Sigmoid colon (tissue), 7 donors: ENCODE measurements at regions of chrX and their contacts with region 1.

Region 1: DNA sequence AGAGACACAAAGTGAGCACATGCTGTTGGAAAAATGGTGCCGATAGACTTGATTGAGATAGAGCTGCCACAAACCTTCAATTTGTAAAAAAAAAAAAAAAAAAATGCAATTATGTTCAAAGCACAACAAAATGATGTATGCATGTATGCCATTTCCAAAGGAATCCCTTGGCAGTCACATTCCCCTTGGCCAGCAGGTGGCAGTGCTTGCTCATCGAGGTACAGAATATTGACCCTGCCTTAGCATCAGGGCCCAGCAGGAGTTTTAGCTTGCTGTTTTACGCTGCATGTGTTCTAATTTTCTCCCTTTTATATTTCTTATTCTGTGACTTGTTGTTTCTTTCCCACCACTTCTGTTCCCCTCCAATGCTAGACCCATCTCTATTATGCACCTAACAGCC is 34.5 kb upstream of the CYBB start:
- DNase-seq: peak; percentile 76
- H3K4me3 ChIP-seq: no peak overlapping the region
- H3K27ac ChIP-seq: no peak overlapping the region
- H3K4me1 ChIP-seq: no peaks in the 10 kb centered on the region
- H3K27me3 ChIP-seq: no peaks in the 10 kb centered on the region
- CTCF ChIP-seq: peak; percentile 46 to 75 (median 56)
- EP300 ChIP-seq: no peak
- POLR2A ChIP-seq: no peak

Region 2: GRCh38 chrX:38166478-38167083 is 421.2 kb after region 1 on chrX:
- intact Hi-C with region 1: loop called (anchors 5 kb)
- DNase-seq: no peak
- H3K4me3 ChIP-seq: no peak overlapping the region
- H3K27ac ChIP-seq: no peak overlapping the region
- H3K4me1 ChIP-seq: no peaks in the 10 kb centered on the region
- H3K27me3 ChIP-seq: no peaks in the 10 kb centered on the region
- CTCF ChIP-seq: peak in 2 of 4 experiments; percentile 24 to 43
- EP300 ChIP-seq: no peak
- POLR2A ChIP-seq: no peak